Naive thymus-derived CD8-positive, alpha-beta T cell (primary cell): ENCODE measurements at regions of chr15 and their contacts with region 1.

Region 1: DNA sequence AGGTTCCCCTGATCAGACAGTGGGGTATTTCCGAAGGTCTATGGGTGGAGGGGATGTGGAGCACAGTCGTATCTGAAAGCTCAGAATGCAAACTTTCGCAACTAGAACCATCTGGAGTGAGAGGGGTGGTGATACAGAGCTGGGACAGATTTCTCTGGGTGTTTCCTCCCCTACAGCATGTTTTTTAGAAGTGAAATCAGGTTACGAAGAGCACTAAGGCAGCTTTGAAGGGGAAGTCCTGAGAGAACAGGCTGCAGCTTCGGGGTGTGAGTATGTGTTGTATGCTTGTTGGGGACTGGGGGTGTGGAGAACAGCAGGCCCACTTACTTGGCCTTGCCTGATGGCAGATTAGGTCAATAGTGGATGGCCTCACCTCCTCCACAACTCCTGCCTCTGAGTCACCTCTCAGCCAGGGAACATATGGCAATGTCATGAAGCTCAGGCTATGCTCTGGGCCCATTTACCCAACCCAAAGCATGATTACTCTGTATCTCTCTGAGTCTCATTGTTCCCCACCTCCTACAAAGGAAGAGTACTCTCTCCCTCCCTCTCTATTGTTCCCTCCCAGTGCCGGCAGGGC is 107.2 kb upstream of the RASGRP1 start:
- DNase-seq: peak in 8 of 10 donors; percentile 38 to 73 (median 55)
- ATAC-seq: peak; percentile 52 to 70
- H3K4me3 Mint-ChIP-seq: peak overlapping the region; percentile 46 to 79 (median 70)
- H3K27ac Mint-ChIP-seq: peak overlapping the region; percentile 91 to 99 (median 98)
- H3K4me1 Mint-ChIP-seq: peaks cover 42 to 83% (median 77%) of the 10 kb centered on the region in 4 donors
- H3K27me3 Mint-ChIP-seq: no peaks in the 10 kb centered on the region

Region 2: GRCh38 chr15:38514601-38515000 is 157.2 kb before region 1 on chr15:
- POLR2A ChIA-PET with region 1: no interaction called
- DNase-seq: no peak
- ATAC-seq: no peak
- H3K4me3 Mint-ChIP-seq: no peak overlapping the region
- H3K27ac Mint-ChIP-seq: peak overlapping the region; percentile 35 to 87 (median 68)
- H3K4me1 Mint-ChIP-seq: peaks cover 6 to 32% (median 14%) of the 10 kb centered on the region in 4 donors
- H3K27me3 Mint-ChIP-seq: no peaks in the 10 kb centered on the region

Region 3: DNA sequence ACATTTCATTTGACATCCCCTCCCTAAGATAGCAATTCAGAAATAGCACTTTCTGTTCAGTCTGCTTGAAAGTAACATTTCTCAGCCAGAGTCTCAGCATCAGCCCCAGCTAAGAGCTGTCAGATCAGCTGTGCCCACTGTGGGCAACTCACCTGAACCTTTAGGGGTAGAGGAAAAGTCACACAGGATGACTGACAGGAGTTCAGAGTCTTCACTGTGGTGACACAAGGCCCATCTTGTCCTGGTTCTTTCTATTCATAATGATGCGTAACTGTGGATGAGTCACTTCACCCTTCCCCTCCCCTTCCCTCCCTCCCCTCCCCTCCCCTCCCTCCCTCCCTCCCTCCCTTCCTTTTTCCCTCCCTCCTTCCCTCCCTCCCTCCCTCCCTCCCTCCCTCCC is 11.0 kb before region 1 on chr15:
- POLR2A ChIA-PET with region 1: interaction called, 17 read pairs
- DNase-seq: no peak
- ATAC-seq: peak; percentile 52 to 59
- H3K4me3 Mint-ChIP-seq: peak overlapping the region in 9 of 10 donors; percentile 39 to 81 (median 60)
- H3K27ac Mint-ChIP-seq: peak overlapping the region in 9 of 10 donors; percentile 71 to 93 (median 82)
- H3K4me1 Mint-ChIP-seq: peaks cover 31 to 75% (median 67%) of the 10 kb centered on the region in 4 donors
- H3K27me3 Mint-ChIP-seq: no peaks in the 10 kb centered on the region

Region 4: GRCh38 chr15:38683382-38684242 is 11.8 kb after region 1 on chr15:
- POLR2A ChIA-PET with region 1: interaction called, 66 read pairs
- DNase-seq: peak; percentile 41 to 82 (median 68)
- ATAC-seq: peak; percentile 46 to 51
- H3K4me3 Mint-ChIP-seq: peak overlapping the region in 9 of 10 donors; percentile 3 to 81 (median 61)
- H3K27ac Mint-ChIP-seq: peak overlapping the region; percentile 83 to 97 (median 94)
- H3K4me1 Mint-ChIP-seq: peaks cover 49 to 76% (median 72%) of the 10 kb centered on the region in 4 donors
- H3K27me3 Mint-ChIP-seq: no peaks in the 10 kb centered on the region

Region 5: DNA sequence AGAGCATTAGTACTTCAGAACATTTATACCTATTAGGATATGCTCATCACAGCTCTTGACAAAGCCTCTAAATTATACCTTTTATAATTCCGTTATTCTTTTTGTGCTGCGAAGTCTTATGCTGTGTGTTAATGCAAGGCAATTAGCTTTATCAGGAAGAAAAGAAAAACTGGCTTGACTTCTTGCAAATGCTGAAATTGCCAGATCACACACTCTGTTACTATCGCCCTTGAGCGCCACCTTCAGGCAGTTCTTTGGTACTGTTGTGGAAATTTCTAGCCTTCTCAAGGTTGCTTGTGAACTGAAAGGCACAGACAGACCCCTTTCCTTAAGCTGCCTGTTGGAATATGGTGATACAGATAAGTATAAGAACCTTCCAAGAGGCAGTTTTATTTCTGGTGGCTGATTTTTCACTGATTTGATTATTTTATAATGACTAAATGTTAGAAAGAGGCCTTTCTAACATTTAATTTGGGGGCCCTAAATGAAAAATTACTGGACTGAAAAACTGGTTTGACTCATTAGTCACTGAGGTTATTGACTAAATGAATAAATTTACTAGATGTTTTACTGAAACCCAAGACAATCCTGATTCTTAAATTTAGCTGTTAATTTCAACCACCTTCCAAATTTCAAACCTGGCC is 19.0 kb after region 1 on chr15:
- POLR2A ChIA-PET with region 1: interaction called, 66 read pairs
- DNase-seq: peak; percentile 72 to 87 (median 79)
- ATAC-seq: peak; percentile 24 to 26
- H3K4me3 Mint-ChIP-seq: peak overlapping the region in 6 of 10 donors; percentile 0 to 60 (median 44)
- H3K27ac Mint-ChIP-seq: peak overlapping the region in 9 of 10 donors; percentile 40 to 97 (median 87)
- H3K4me1 Mint-ChIP-seq: peaks cover 36 to 72% (median 64%) of the 10 kb centered on the region in 4 donors
- H3K27me3 Mint-ChIP-seq: no peaks in the 10 kb centered on the region